K562 (cell line): ENCODE measurements at regions of chr3 and their contacts with region 1.

Region 1: DNA sequence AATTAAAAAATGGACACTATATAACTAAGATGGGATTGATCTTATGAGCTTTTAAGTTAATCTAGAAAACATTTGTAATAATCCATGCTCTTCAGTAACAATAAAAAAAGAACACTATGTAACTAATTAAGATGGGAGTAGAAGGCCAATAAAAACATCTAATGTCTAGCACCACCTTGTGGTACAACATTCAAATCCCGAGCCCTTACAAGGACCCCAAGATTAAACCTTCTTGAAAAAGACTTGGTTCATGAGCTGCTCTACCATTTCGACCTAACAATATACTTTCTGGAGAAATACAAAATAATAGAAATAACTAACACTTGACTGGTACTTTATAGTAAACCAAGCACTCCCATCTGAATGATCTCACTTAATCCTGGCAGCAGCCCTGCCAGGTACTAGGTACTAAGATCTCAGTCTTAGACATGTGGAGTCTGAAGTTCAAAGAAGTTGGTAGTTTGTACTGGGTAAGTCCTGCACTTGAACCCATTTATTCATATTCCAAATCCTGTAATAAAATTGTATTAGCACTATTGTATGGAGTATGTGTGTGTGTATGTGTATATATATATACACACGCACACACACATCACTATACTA is 21.8 kb downstream of the METTL6 start:
- DNase-seq: peak; percentile 62 to 76 (median 63)
- ATAC-seq: peak; percentile 89
- H3K4me3 ChIP-seq: no peak overlapping the region
- H3K27ac ChIP-seq: no peak overlapping the region
- H3K4me1 ChIP-seq: no peaks in the 10 kb centered on the region
- H3K27me3 ChIP-seq: no peaks in the 10 kb centered on the region
- CTCF ChIP-seq: peak; percentile 62 to 88 (median 72)
- EP300 ChIP-seq: no peak
- POLR2A ChIP-seq: no peak
- RAD21 ChIP-seq: peak; percentile 77 to 92

Region 2: GRCh38 chr3:15108082-15108545 is 297.4 kb before region 1 on chr3:
- CTCF ChIA-PET with region 1: interaction called, 3 read pairs
- POLR2A ChIA-PET with region 1: interaction called, 3 read pairs
- in situ Hi-C with region 1: no loop called
- intact Hi-C with region 1: loop called (anchors 2 kb)
- DNase-seq: peak; percentile 91 to 95 (median 92)
- ATAC-seq: peak; percentile 98
- H3K4me3 ChIP-seq: no peak overlapping the region
- H3K27ac ChIP-seq: no peak overlapping the region
- H3K4me1 ChIP-seq: peaks cover 0 to 5% of the 10 kb centered on the region in 2 experiments; a peak in 1 of 5 replicates
- H3K27me3 ChIP-seq: peaks cover 0 to 6% of the 10 kb centered on the region in 2 experiments; a peak in 2 of 5 replicates
- CTCF ChIP-seq: peak; percentile 93 to 99 (median 93)
- EP300 ChIP-seq: no peak
- POLR2A ChIP-seq: no peak
- RAD21 ChIP-seq: peak; percentile 86 to 92

Region 3: DNA sequence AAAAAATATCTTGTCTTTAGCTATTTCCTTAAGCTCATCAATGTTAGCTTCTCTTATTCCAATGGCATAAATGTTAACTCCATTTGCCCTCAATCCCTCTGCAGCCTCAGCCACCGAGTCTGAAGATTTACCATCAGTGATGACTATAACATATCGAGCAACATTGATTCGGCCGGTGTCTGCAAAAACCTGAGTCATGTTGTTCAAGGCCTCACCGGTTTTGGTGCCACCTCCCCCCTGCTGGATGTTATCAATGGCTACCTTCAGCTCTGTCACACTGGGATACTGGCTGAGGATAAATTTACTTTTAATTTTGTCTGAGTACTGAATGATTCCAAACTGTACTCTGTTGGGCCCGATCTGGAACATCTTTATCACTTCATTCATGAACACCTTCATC is 240.5 kb before region 1 on chr3:
- CTCF ChIA-PET with region 1: no interaction called
- POLR2A ChIA-PET with region 1: no interaction called
- in situ Hi-C with region 1: no loop called
- intact Hi-C with region 1: no loop called
- DNase-seq: no peak
- ATAC-seq: peak; percentile 51; the same call in 2 of the 3 replicates
- H3K4me3 ChIP-seq: no peak overlapping the region
- H3K27ac ChIP-seq: no peak overlapping the region
- H3K4me1 ChIP-seq: no peaks in the 10 kb centered on the region
- H3K27me3 ChIP-seq: peaks cover 8 to 14% of the 10 kb centered on the region in 2 experiments; a peak in 4 of 5 replicates
- CTCF ChIP-seq: no peak
- EP300 ChIP-seq: no peak
- POLR2A ChIP-seq: no peak
- RAD21 ChIP-seq: no peak

Region 4: DNA sequence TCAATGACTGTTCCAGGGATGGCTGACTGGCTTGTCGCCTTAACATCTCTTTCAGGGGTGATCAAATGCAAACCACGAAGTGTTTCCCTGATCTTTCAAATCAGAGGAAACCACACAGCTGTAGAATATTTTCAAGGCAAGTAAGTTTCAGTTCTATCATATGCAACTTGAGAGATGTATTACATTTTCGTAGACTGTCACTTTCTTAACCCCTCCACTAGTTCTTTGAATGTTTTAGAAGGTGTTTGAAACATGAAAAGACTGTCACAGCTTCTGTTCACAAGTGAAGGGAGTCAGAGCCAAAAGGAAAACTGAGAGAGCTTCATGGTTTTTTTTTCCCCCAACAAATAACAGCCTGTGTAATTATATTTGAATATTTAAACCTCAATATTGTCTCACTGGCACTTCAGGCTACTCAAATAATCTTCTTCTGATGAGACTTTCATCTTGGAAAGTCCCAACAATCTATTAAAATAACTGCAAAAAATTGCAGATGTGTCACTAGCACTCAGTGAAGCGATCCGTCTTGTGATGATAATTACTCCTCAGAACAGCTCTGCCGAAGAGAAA is 225.4 kb before region 1 on chr3:
- CTCF ChIA-PET with region 1: no interaction called
- POLR2A ChIA-PET with region 1: no interaction called
- in situ Hi-C with region 1: no loop called
- intact Hi-C with region 1: no loop called
- DNase-seq: no peak
- ATAC-seq: no peak
- H3K4me3 ChIP-seq: no peak overlapping the region
- H3K27ac ChIP-seq: no peak overlapping the region
- H3K4me1 ChIP-seq: no peaks in the 10 kb centered on the region
- H3K27me3 ChIP-seq: peaks cover 18 to 19% of the 10 kb centered on the region in 2 experiments; a peak in 3 of 5 replicates
- CTCF ChIP-seq: no peak
- EP300 ChIP-seq: no peak
- POLR2A ChIP-seq: no peak
- RAD21 ChIP-seq: no peak

Region 5: DNA sequence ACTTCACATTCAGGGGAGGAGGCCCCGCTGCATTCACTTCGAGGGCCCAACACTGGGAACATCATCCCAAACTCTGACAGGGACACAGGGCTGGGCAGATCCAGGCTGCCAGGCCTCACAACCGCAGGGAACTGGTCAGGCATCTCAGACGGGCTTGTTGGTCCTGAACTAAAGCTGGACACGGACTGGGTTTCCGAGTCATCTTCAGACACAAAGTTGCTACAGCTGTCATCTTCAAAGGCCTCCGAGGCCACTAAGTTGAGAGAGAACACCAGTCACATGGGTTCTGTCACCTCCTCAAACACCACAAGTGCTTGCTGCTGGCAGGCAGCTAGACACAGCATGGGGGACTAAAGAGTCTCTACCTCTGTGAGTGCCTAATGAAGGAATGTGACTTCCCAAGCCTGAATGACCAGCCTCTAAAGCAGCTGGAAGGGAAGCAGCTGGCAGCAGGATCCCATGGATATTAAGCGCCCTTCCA is 148.6 kb before region 1 on chr3:
- CTCF ChIA-PET with region 1: no interaction called
- POLR2A ChIA-PET with region 1: no interaction called
- in situ Hi-C with region 1: no loop called
- intact Hi-C with region 1: no loop called
- DNase-seq: no peak
- ATAC-seq: no peak
- H3K4me3 ChIP-seq: no peak overlapping the region
- H3K27ac ChIP-seq: no peak overlapping the region
- H3K4me1 ChIP-seq: peaks cover 0 to 20% of the 10 kb centered on the region in 2 experiments; a peak in 4 of 5 replicates
- H3K27me3 ChIP-seq: no peaks in the 10 kb centered on the region
- CTCF ChIP-seq: no peak
- EP300 ChIP-seq: no peak
- POLR2A ChIP-seq: 0 out of 2 replicates have a peak, but pooled peaks have one; percentile 10
- RAD21 ChIP-seq: no peak

Region 6: DNA sequence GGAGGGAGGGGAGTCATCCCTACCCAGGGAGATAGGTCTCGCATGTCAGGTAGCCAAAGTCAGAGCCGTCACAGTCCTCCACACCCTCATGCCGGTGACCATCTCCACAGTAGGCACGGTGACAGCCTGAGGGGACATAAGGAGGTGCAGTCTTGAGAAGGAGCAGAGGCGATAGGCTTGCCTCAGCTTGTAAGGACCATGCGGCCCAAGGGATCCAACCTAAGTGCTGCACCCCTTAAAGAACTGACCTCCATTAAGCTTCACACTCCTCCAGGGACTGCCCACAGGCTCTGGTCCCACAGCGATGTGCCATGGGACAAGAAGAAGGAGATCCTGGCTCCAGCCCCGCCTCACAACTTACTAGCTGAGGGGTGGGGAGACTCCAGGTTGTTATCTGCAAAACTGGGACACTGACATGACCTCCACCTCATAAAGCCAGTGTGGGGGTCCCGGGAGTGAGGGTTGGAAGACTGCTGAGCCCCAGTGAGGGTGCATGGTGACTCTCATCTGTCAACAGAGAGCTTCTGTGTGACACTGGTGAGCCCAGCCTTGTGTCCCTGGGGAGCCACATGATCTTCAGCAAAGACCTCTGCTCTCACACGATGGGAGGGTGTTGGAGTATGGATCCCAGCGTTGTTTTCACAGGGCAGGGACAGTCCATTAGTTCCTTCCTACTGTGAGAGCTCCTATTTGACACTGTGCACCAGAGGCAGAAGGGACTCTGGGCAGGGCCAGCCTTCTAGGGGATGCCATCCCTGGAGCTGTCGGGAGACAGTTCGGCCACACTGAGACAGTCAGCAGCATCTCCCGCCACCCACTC is 48.5 kb after region 1 on chr3:
- CTCF ChIA-PET with region 1: no interaction called
- POLR2A ChIA-PET with region 1: no interaction called
- in situ Hi-C with region 1: no loop called
- intact Hi-C with region 1: no loop called
- DNase-seq: no peak
- ATAC-seq: no peak; the same call in 2 of the 3 replicates
- H3K4me3 ChIP-seq: no peak overlapping the region
- H3K27ac ChIP-seq: no peak overlapping the region
- H3K4me1 ChIP-seq: 0 out of 5 replicates have a peak, but pooled peaks cover 0 to 3% of the 10 kb centered on the region in 2 experiments
- H3K27me3 ChIP-seq: peaks cover 0 to 10% of the 10 kb centered on the region in 2 experiments; a peak in 1 of 5 replicates
- CTCF ChIP-seq: no peak
- EP300 ChIP-seq: no peak
- POLR2A ChIP-seq: no peak
- RAD21 ChIP-seq: no peak